ENCODE measurements at regions of chr4 and their contacts with region 1.

Region 1: DNA sequence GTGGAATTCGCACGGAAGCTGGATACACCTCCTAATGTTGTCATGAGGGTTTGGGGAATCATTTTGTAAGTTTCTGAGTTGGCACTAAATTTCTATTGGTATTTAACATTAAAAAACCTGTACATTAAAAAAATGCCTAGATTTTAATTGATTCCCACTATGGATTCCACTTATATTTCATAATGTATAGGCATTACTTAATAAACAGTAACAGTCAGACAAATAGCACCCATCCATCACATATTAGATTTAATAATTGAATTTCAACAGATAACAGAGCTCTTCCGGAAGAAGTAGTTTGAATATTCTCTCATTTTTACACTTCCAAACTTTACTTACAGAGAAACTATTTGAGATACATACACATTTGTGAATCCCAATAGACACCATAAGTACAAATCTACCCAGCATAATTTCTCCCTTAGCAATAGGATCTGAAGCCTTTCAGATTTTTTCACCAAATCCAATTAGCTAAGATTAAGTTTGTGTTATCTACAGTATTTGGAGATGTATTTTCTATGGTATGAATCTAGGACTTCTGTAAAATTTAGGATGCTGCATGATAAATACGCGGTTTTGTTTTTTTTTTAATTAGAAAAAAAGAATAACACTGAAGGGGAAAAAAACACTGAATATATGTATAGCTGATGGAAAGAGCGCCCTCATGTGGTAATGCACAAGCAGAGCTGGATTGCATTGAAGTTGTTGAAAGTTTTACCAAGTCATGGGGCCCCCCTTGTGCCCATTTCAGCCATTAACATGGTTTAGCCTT is 12.2 kb upstream of the ODAM start:
- DNase-seq: peak; percentile 40
- ATAC-seq: no peak
- H3K4me3 Mint-ChIP-seq: no peak overlapping the region
- H3K27ac Mint-ChIP-seq: no peak overlapping the region
- H3K4me1 Mint-ChIP-seq: no peaks in the 10 kb centered on the region
- H3K27me3 Mint-ChIP-seq: no peaks in the 10 kb centered on the region

Region 2: GRCh38 chr4:69823481-69824186 is 359.7 kb before region 1 on chr4:
- CTCF ChIA-PET with region 1: no interaction called
- POLR2A ChIA-PET with region 1: no interaction called
- intact Hi-C with region 1: loop called in 1 of 2 experiments (anchors 5 kb)
- DNase-seq: peak; percentile 71
- ATAC-seq: peak; percentile 94
- H3K4me3 Mint-ChIP-seq: no peak overlapping the region
- H3K27ac Mint-ChIP-seq: no peak overlapping the region
- H3K4me1 Mint-ChIP-seq: peaks cover 5% of the 10 kb centered on the region
- H3K27me3 Mint-ChIP-seq: no peaks in the 10 kb centered on the region

Region 3: GRCh38 chr4:69896530-69897116 is 286.7 kb before region 1 on chr4:
- CTCF ChIA-PET with region 1: interaction called, 4 read pairs
- POLR2A ChIA-PET with region 1: no interaction called
- intact Hi-C with region 1: loop called in 1 of 2 experiments (anchors 5 kb)
- DNase-seq: no peak
- ATAC-seq: no peak
- H3K4me3 Mint-ChIP-seq: no peak overlapping the region
- H3K27ac Mint-ChIP-seq: no peak overlapping the region
- H3K4me1 Mint-ChIP-seq: no peaks in the 10 kb centered on the region
- H3K27me3 Mint-ChIP-seq: peaks cover 7% of the 10 kb centered on the region

Region 4: DNA sequence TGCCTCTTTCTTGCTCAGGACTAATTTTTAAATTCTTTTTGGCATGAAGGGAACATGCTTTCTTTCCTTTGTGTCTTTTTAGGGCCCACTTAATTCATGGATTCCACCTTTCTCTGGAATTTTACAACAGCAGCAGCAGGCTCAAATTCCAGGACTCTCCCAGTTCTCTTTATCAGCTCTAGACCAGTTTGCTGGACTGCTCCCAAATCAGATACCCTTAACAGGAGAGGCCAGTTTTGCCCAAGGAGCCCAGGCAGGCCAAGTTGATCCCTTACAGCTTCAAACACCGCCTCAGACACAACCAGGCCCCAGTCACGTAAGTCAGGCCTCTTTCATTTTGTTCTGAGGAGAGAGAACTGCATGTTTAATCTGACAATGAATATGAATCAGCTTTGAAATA is 14.5 kb after region 1 on chr4:
- CTCF ChIA-PET with region 1: interaction called, 10 read pairs
- POLR2A ChIA-PET with region 1: no interaction called
- intact Hi-C with region 1: no loop called
- DNase-seq: no peak
- ATAC-seq: no peak
- H3K4me3 Mint-ChIP-seq: no peak overlapping the region
- H3K27ac Mint-ChIP-seq: no peak overlapping the region
- H3K4me1 Mint-ChIP-seq: no peaks in the 10 kb centered on the region
- H3K27me3 Mint-ChIP-seq: no peaks in the 10 kb centered on the region

Region 5: DNA sequence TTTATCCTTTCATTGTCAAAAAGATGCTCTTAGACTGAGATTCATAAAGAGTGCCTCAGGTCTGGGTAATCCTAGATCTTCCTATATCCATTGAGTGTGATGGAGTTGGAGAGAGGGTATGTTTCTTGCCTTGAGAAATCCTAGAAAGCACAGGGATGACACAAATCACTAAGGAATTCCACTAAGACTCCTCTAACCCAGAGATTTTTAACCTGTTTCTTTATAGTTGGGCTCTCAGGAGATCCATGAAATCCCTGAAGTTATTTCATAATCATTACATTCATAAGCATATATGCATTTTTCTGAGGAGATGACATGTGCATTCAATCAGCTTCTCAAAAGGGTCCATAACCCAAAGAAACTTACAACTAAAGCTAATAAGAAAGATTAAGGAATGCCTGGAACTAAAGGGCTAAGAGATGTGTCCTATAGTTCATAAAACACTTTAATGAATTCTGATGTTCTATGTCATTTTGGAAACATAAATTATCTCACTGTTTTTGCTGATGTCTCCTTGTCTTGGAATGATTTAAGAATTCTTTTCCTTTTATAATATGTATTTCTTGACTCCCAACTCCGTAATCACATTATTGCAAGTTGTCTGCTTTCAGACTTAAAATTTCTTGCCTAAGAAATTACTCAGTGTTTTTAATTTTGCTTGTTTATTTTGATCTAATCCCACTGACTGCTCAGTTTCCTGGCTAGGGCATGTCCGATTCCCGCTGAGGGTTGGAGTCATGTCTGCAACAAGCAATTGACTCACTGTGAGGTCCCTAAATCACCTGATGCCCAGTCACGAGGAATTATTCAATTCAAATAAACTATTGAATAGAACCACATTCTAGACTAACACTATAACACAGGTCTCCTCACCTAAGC is 332.3 kb after region 1 on chr4:
- CTCF ChIA-PET with region 1: no interaction called
- POLR2A ChIA-PET with region 1: no interaction called
- intact Hi-C with region 1: no loop called
- DNase-seq: no peak
- ATAC-seq: no peak
- H3K4me3 Mint-ChIP-seq: no peak overlapping the region
- H3K27ac Mint-ChIP-seq: no peak overlapping the region
- H3K4me1 Mint-ChIP-seq: no peaks in the 10 kb centered on the region
- H3K27me3 Mint-ChIP-seq: peaks cover 9% of the 10 kb centered on the region

Measured in activated CD4-positive, alpha-beta T cell treated with anti-CD3 and anti-CD28 coated beads for 36 hours (primary cell).